ENCODE measurements at regions of chr2 and their contacts with region 1.

Region 1: GRCh38 chr2:47386551-47386950 is 16.4 kb upstream of the MSH2 start:
- DNase-seq: no peak
- ATAC-seq: no peak

Region 2: DNA sequence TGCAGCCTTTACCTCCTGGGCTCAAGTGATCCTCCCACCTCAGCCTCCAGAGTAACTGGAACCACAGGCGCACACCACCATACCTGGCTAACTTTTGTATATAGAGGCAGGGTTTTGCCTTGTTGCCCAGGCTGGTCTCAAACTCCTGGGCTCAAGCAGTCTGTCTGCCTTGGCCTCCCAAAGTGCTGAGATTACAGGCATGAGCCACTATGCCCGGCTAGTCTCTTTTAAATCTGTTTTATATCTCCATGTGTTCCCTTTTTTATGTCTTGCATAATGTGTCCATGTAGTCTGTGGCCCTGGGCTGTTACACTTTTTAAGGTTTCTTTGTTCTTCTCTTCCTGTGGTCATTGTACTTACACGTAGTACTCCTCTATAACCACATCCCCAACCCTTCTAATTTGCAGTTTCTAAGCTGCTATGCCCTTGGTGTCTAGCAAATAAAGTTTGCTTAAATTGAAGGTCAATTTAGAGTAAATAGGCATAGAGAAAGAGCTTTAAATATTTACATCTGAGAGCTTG is 639.2 kb before region 1 on chr2:
- intact Hi-C with region 1: no loop called
- DNase-seq: no peak
- ATAC-seq: no peak

Region 3: GRCh38 chr2:46923041-46923528 is 463.5 kb before region 1 on chr2:
- intact Hi-C with region 1: no loop called
- DNase-seq: no peak
- ATAC-seq: no peak

Region 4: GRCh38 chr2:46970334-46971288 is 415.9 kb before region 1 on chr2:
- intact Hi-C with region 1: loop called in 1 of 2 experiments (anchors 10 kb)
- DNase-seq: peak; percentile 44
- ATAC-seq: peak; percentile 13 to 34

Region 5: DNA sequence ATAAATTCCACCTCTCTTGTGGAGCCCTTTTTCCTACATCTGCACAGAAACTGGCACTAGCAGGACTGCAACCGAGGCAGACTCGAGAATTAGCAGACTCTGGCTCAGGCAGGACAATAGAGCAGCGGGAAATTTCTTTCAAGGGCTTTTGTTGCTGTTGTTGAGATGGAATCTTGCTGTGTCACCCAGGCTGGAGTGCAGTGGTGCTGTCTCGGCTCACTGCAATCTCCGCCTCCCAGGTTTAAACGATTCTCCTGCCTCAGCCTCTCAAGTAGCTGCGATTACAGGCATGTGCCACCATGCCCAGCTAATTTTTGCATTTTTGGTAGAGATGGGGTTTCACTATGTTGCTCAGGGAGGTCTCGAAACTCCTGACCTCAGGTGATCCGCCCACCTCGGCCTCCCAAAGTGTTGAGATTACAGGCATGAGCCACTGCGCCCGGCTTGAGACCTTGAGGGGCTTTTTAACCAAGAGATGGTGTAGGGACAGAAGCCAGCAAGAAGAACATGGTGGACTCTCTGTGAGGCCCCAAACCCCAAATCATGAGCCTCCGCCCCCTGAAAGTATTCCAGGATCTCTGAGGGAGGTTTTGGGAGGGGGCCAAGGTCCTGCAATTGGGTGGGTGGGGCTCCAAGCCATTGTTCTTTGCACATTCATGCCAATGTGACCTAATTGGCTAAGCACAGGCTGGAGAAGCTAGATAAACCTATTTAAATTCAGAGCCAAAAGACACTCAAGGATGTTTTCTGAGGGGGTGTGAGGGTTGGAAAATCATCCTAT is 52.0 kb before region 1 on chr2:
- intact Hi-C with region 1: loop called (anchors 1 to 5 kb)
- DNase-seq: peak; percentile 35
- ATAC-seq: no peak

Region 6: DNA sequence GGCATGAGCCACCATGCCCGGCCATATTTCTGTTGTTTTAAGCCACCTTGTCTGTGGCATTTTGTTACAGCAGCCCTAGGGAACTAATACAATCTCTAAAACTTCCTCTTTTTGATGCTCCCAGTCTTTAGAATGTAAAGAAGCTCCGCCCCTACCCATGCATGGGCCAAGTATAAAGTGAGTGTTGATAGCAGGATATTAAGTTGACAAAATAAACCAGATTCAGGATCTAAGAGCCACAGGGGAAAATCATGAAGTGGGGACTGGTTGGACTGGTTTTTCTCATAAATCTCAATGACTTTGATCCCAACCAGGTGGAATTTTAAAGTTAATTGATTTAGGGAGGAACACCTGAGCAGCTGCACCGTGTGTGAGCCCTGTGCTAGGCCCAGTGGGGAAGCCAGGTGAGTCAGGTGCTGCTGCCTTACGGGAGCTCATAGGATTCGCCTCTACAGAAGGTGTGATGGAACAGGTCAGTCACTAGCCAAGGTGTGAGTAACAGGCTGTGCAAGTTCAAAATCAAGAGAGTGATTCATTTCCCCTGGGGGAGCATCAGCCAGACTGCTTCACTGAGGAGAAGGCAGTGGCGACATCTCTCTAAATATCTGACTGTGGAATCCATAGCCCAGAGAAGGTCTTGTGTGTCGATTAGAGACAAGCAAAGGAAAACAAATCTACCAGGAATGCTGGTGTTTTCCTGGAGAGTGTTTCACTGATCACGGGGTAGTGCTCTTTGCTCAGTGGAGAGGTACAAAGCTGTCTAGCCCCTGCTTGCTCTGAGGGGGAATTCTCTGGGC is 46.6 kb before region 1 on chr2:
- intact Hi-C with region 1: loop called (anchors 1 to 5 kb)
- DNase-seq: no peak
- ATAC-seq: no peak

Region 7: GRCh38 chr2:47402805-47403608 is 16.5 kb after region 1 on chr2 and contains the start of gene MSH2:
- intact Hi-C with region 1: no loop called
- DNase-seq: peak; percentile 95
- ATAC-seq: peak; percentile 99
- total RNA-seq, gene MSH2: 11.4 to 13.5 TPM